Natural killer cell (primary cell): ENCODE measurements at regions of chr19 and their contacts with region 1.

Region 1: DNA sequence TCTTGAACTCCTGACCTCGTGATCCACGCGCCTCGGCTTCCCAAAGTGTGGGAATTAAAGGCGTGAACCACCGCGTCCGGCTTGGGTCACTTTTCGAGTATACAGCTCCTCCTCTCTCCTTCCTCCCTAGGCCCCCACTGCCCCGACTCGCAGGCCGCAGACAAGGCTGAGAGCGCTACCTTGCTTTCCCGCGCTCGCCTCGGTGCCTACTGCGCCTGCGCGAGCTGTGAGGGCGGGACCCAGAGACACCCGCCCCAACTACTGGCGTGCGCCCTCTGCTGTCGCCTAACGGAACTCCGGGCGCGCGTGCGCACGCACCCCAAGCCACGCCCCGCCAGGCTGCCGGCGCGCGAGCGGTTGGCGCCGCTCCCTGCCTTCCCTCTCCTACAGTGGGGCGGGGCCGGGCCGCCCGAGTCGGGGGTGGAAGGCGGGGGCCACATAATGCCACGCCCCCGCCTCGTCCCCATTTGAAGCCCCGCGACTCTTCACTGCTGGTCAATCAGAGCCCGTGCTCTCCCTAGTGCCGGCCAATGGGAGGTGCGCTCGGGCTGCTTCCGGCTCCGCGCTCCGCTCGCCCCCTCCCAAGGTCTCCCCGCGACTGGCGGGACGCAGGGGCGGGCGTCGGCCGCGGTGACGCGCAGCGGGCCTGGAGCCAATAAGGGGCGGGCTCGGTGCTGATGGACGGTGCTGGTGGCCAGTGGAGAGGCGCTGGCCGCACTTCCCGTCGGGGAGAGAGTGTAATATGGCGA is at the start of gene RAB8A:
- DNase-seq: peak; percentile 99 to 100
- ATAC-seq: peak; percentile 86 to 94 (median 87)
- H3K4me3 ChIP-seq: peak within 1 kb of the TSS; percentile 88
- H3K4me3 Mint-ChIP-seq: peak within 1 kb of the TSS; percentile 96
- H3K27ac ChIP-seq: peak within 1 kb of the TSS; percentile 91
- H3K27ac Mint-ChIP-seq: peak within 1 kb of the TSS; percentile 92 to 97
- H3K4me1 ChIP-seq: peaks cover 45% of the 10 kb centered on the region
- H3K4me1 Mint-ChIP-seq: peaks cover 22 to 35% of the 10 kb centered on the region in 2 donors
- H3K27me3 ChIP-seq: no peaks in the 10 kb centered on the region
- H3K27me3 Mint-ChIP-seq: no peaks in the 10 kb centered on the region
- CTCF ChIP-seq: peak; percentile 95
- total RNA-seq, gene RAB8A: 137 to 161 (median 149) TPM

Region 2: DNA sequence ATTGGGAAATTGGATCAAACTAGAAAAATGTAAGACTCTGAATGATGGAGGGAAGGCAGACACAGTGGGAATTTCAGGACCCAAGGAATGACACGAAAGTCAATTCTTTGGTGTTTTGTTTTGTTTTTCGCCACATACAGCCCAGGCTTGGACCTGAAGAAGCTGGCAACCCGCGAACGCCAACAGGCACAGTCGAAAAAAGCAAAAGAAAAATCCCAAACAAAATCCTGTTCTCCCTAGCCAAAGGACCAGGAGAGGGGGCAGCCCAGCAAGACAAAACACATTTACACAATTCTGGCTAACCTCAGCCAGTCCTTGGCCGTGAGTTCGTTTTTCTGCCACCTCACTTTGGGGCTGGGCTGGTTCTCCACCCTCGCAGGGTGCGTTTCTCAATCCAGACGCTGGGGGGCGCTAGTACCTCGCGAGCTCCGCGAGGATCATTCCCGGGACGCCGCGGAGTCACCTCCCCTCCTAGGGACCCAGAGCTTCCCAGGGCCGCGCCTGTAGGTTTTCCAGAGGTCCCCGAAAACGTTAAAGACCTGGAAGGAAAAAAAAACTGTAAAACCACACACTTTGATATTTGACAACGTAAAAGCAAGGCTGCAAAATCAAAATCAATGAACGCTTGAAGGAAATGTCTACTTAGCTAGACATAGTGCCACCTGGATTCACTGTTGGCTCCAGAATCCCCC is 69.9 kb before region 1 on chr19:
- intact Hi-C with region 1: loop called (anchors 1 kb)
- DNase-seq: peak; percentile 77 to 84
- ATAC-seq: peak; percentile 80 to 96 (median 87)
- H3K4me3 ChIP-seq: no peak overlapping the region
- H3K4me3 Mint-ChIP-seq: no peak overlapping the region
- H3K27ac ChIP-seq: no peak overlapping the region
- H3K27ac Mint-ChIP-seq: no peak overlapping the region
- H3K4me1 ChIP-seq: peaks cover 7% of the 10 kb centered on the region
- H3K4me1 Mint-ChIP-seq: peaks cover 0 to 5% of the 10 kb centered on the region in 2 donors
- H3K27me3 ChIP-seq: no peaks in the 10 kb centered on the region
- H3K27me3 Mint-ChIP-seq: peaks cover 0 to 3% of the 10 kb centered on the region in 2 donors
- CTCF ChIP-seq: peak; percentile 99

Region 3: DNA sequence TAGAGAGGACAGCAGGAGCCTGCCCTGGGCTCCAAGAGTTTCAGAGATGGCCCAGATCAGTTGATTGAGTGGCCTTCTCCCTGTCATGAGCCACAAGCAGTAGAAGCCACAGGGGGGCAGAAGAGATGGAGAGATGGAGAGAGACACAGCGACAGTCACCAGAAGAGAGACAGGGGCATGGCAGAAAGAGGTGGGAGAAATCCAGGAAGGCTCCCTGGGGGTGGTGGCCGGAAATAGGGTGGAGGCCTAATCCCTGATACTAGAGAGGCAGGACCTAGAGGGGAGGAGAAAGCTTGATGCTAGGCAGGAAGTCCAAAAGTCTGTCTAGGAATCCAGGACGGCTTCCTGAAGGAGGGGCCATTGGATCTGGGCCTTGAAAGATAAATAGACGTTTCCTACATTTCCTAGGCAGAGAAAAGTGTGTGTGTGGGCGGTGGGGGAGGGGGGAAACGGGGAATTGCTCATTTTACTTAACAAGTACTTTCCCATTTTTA is 44.7 kb before region 1 on chr19:
- intact Hi-C with region 1: loop called (anchors 1 kb)
- DNase-seq: peak in 1 of 2 donors; percentile 74
- ATAC-seq: peak in 2 of 3 donors; percentile 19 to 35
- H3K4me3 ChIP-seq: no peak overlapping the region
- H3K4me3 Mint-ChIP-seq: no peak overlapping the region
- H3K27ac ChIP-seq: no peak overlapping the region
- H3K27ac Mint-ChIP-seq: peak overlapping the region in 1 of 2 donors; percentile 5
- H3K4me1 ChIP-seq: peaks cover 37% of the 10 kb centered on the region
- H3K4me1 Mint-ChIP-seq: peaks cover 12 to 22% of the 10 kb centered on the region in 2 donors
- H3K27me3 ChIP-seq: no peaks in the 10 kb centered on the region
- H3K27me3 Mint-ChIP-seq: no peaks in the 10 kb centered on the region
- CTCF ChIP-seq: peak; percentile 34

Region 4: DNA sequence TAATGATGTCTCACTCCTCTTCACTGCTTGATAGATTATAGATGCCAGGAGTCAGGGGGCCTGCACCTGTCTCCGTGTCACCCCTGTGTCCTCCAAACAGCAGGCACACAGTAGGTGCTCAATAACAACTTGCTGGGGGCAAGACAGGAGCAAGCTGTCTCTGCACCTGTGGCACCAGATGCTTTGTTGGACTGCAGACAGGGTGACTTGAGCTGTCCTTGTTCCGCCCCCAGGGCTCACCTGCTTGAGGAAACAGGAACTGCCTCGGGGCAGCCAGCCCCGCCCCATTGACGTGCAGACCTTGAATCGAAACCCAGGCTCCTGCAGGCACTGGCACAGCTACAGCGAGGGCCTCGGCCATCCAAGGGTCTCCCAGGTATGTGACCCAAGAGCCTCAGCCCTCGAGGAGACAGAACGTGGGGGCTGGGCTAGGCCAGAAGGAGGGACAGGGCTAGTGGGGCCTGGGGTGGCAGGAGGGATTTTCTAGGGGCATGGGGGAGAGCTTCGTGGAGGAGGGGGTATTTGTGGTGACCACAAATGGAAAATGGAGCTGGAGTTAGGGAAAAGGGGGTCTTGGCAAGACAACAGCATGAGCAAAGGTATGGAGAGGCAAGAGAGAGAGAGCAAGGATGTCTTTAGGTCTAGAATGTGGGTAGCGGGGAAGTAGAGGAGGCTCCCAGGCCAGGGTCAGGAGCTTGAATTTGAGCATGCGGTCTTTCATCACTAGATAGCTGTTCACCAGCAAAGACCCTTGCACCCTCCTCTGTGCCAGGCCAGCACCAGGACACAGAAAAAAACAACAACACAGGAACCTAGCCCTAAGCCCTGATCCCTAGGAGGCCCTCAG is 32.3 kb after region 1 on chr19 and contains the start of gene HSH2D:
- intact Hi-C with region 1: loop called (anchors 5 kb)
- DNase-seq: peak; percentile 73 to 89
- ATAC-seq: peak; percentile 68 to 84 (median 69)
- H3K4me3 ChIP-seq: peak within 1 kb of the TSS; percentile 71
- H3K4me3 Mint-ChIP-seq: peak within 1 kb of the TSS; percentile 99
- H3K27ac ChIP-seq: peak within 1 kb of the TSS; percentile 82
- H3K27ac Mint-ChIP-seq: peak within 1 kb of the TSS; percentile 99
- H3K4me1 ChIP-seq: peaks cover 99% of the 10 kb centered on the region
- H3K4me1 Mint-ChIP-seq: peaks cover 62 to 64% of the 10 kb centered on the region in 2 donors
- H3K27me3 ChIP-seq: no peaks in the 10 kb centered on the region
- H3K27me3 Mint-ChIP-seq: no peaks in the 10 kb centered on the region
- CTCF ChIP-seq: no peak
- total RNA-seq, gene HSH2D: 203 to 319 (median 278) TPM